ENCODE measurements at regions of chr5 and their contacts with region 1.

Region 1: DNA sequence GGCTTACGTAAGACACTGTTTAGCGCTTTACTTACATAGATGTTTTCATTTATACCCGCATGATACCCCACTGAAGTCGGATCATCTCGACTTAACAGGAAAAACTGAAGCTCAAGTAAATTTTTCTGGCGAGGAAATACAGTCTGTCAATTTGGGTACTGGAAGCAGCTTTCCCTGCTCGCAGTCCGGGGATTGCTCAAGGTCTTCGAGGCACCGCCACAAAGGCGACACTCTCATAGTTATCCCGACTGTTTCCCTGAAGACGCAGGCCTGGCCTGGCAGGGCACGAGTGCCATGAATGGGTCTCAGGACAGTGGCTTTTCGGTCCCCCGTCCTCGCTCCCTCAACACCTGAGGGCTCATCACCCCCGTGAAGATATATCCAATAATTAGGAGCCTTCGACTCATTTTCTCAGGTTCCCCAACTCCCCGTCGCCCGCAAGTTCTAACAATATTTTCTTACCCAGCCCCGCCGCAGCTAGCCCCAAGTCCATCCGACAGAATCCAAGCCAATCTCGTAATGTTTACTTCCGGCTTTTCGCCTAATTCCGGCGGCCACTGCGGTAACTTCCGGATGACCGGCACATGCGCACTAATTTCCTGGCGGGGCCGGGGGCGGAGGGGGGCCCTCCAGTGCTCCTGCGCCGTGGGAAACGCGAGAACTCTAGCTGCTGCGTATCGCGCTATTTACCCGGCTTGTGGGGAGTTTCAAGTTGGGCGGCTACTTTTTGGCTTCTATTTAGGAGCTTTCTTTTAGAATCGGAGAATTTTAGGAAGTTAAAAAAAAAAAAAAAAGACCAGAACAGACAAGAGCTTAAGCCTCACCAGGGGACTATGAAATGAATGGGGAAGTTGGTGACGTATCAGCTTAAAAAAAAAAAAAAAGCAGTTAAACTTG is at the start of gene SLU7:
- DNase-seq: peak; percentile 86 to 96 (median 90)
- ATAC-seq: peak; percentile 79
- H3K4me3 ChIP-seq: peak within 1 kb of the TSS; percentile 94
- H3K4me3 Mint-ChIP-seq: peak within 1 kb of the TSS; percentile 98
- H3K27ac ChIP-seq: peak within 1 kb of the TSS; percentile 88 to 91
- H3K27ac Mint-ChIP-seq: peak within 1 kb of the TSS; percentile 92
- H3K4me1 ChIP-seq: peaks cover 33% of the 10 kb centered on the region
- H3K4me1 Mint-ChIP-seq: peaks cover 85% of the 10 kb centered on the region
- H3K27me3 ChIP-seq: no peaks in the 10 kb centered on the region
- H3K27me3 Mint-ChIP-seq: no peaks in the 10 kb centered on the region
- CTCF ChIP-seq: no peak
- total RNA-seq, gene SLU7: 99.9 to 106 TPM

Region 2: GRCh38 chr5:160008877-160009590 is 409.8 kb before region 1 on chr5 and contains the start of gene TTC1:
- CTCF ChIA-PET with region 1: no interaction called
- POLR2A ChIA-PET with region 1: interaction called, 8 read pairs
- intact Hi-C with region 1: loop called in 1 of 2 experiments (anchors 5 kb)
- DNase-seq: peak; percentile 83 to 99 (median 90)
- ATAC-seq: peak; percentile 97
- H3K4me3 ChIP-seq: peak within 1 kb of the TSS; percentile 70
- H3K4me3 Mint-ChIP-seq: peak within 1 kb of the TSS; percentile 92
- H3K27ac ChIP-seq: peak within 1 kb of the TSS; percentile 65 to 75
- H3K27ac Mint-ChIP-seq: peak within 1 kb of the TSS; percentile 92
- H3K4me1 ChIP-seq: peaks cover 18% of the 10 kb centered on the region
- H3K4me1 Mint-ChIP-seq: peaks cover 30% of the 10 kb centered on the region
- H3K27me3 ChIP-seq: no peaks in the 10 kb centered on the region
- H3K27me3 Mint-ChIP-seq: no peaks in the 10 kb centered on the region
- CTCF ChIP-seq: no peak
- total RNA-seq, gene TTC1: 15.9 to 16.3 TPM

Region 3: GRCh38 chr5:160399402-160400353 is 19.1 kb before region 1 on chr5 and contains the start of gene FAM200C:
- CTCF ChIA-PET with region 1: interaction called, 3 read pairs
- POLR2A ChIA-PET with region 1: interaction called, 10 read pairs
- intact Hi-C with region 1: loop called in 1 of 2 experiments (anchors 2 kb)
- DNase-seq: peak in 13 of 14 experiments; percentile 17 to 84 (median 50)
- ATAC-seq: peak; percentile 82
- H3K4me3 ChIP-seq: peak within 1 kb of the TSS; percentile 80
- H3K4me3 Mint-ChIP-seq: peak within 1 kb of the TSS; percentile 92
- H3K27ac ChIP-seq: peak within 1 kb of the TSS; percentile 2 to 40
- H3K27ac Mint-ChIP-seq: peak within 1 kb of the TSS; percentile 58
- H3K4me1 ChIP-seq: peaks cover 12% of the 10 kb centered on the region
- H3K4me1 Mint-ChIP-seq: peaks cover 24% of the 10 kb centered on the region
- H3K27me3 ChIP-seq: no peaks in the 10 kb centered on the region
- H3K27me3 Mint-ChIP-seq: no peaks in the 10 kb centered on the region
- CTCF ChIP-seq: no peak
- total RNA-seq, gene FAM200C: 0.16 TPM in 1 of 2 experiments, not detected in the other

Region 4: GRCh38 chr5:160445751-160446150 is 26.9 kb after region 1 on chr5:
- CTCF ChIA-PET with region 1: no interaction called
- POLR2A ChIA-PET with region 1: no interaction called
- intact Hi-C with region 1: no loop called
- DNase-seq: no peak
- ATAC-seq: no peak
- H3K4me3 ChIP-seq: no peak overlapping the region
- H3K4me3 Mint-ChIP-seq: no peak overlapping the region
- H3K27ac ChIP-seq: no peak overlapping the region
- H3K27ac Mint-ChIP-seq: no peak overlapping the region
- H3K4me1 ChIP-seq: peaks cover 9% of the 10 kb centered on the region
- H3K4me1 Mint-ChIP-seq: no peaks in the 10 kb centered on the region
- H3K27me3 ChIP-seq: no peaks in the 10 kb centered on the region
- H3K27me3 Mint-ChIP-seq: no peaks in the 10 kb centered on the region
- CTCF ChIP-seq: no peak

Region 5: DNA sequence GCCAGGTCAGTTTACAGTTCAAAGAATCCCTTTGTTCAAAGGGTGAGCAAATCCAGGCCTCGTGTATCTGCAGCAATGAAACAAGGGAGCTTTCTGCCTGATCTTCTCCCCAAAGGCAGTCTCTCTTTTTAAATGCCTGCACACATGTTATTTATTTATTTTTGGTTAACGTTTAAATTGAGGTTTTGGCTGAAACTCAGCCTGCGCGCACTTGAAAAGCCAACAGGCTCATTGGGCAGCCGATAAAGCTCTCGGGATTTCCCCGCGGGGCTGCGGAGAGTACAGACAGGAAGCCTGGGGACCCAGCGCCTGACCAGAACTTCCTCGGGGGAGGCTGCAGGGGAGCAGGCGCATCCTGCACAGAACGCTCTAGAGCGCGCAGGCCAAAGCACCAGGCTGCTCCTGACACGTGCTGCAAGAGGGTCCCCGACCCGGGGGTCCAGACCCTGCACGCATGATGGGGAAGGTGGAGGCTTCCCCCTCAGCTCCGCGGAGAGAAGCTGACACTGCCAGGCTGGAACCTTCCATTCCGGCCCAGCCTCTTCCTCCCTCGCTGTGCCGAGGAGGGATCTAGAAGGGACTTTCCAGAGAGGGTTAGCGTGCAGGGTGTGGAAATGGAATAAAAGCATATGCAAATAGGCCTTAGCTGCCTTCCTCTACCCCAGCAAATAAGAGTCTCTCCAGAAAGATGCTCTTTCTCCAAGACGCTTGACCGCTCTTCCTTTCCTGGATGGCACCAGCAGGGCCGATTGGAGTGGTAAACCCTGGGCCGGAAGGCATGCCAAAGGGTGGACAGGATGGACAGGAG is 49.0 kb after region 1 on chr5:
- CTCF ChIA-PET with region 1: interaction called, 5 read pairs
- POLR2A ChIA-PET with region 1: interaction called, 31 read pairs
- intact Hi-C with region 1: loop called in 1 of 2 experiments (anchors 5 kb)
- DNase-seq: peak; percentile 37 to 91 (median 60)
- ATAC-seq: peak; percentile 84
- H3K4me3 ChIP-seq: peak overlapping the region; percentile 69
- H3K4me3 Mint-ChIP-seq: peak overlapping the region; percentile 94
- H3K27ac ChIP-seq: peak overlapping the region; percentile 50 to 64
- H3K27ac Mint-ChIP-seq: peak overlapping the region; percentile 88
- H3K4me1 ChIP-seq: peaks cover 44% of the 10 kb centered on the region
- H3K4me1 Mint-ChIP-seq: peaks cover 86% of the 10 kb centered on the region
- H3K27me3 ChIP-seq: no peaks in the 10 kb centered on the region
- H3K27me3 Mint-ChIP-seq: no peaks in the 10 kb centered on the region
- CTCF ChIP-seq: no peak

Region 6: GRCh38 chr5:161471211-161471950 is 1052.6 kb after region 1 on chr5:
- CTCF ChIA-PET with region 1: no interaction called
- POLR2A ChIA-PET with region 1: no interaction called
- intact Hi-C with region 1: no loop called
- DNase-seq: no peak
- ATAC-seq: no peak
- H3K4me3 ChIP-seq: no peak overlapping the region
- H3K4me3 Mint-ChIP-seq: no peak overlapping the region
- H3K27ac ChIP-seq: no peak overlapping the region
- H3K27ac Mint-ChIP-seq: no peak overlapping the region
- H3K4me1 ChIP-seq: no peaks in the 10 kb centered on the region
- H3K4me1 Mint-ChIP-seq: no peaks in the 10 kb centered on the region
- H3K27me3 ChIP-seq: no peaks in the 10 kb centered on the region
- H3K27me3 Mint-ChIP-seq: no peaks in the 10 kb centered on the region
- CTCF ChIP-seq: no peak